ENCODE measurements at regions of chr6 and their contacts with region 1.

Region 1: GRCh38 chr6:149431905-149432775 is 32.1 kb downstream of the SUMO4 start:
- DNase-seq: peak; percentile 78 to 94 (median 88)
- ATAC-seq: peak; percentile 84
- H3K4me3 ChIP-seq: peak overlapping the region; percentile 17
- H3K4me3 Mint-ChIP-seq: peak overlapping the region; percentile 45
- H3K27ac ChIP-seq: no peak overlapping the region
- H3K27ac Mint-ChIP-seq: no peak overlapping the region
- H3K4me1 ChIP-seq: peaks cover 6% of the 10 kb centered on the region
- H3K4me1 Mint-ChIP-seq: peaks cover 6% of the 10 kb centered on the region
- H3K27me3 ChIP-seq: no peaks in the 10 kb centered on the region
- H3K27me3 Mint-ChIP-seq: no peaks in the 10 kb centered on the region
- CTCF ChIP-seq: peak; percentile 96

Region 2: DNA sequence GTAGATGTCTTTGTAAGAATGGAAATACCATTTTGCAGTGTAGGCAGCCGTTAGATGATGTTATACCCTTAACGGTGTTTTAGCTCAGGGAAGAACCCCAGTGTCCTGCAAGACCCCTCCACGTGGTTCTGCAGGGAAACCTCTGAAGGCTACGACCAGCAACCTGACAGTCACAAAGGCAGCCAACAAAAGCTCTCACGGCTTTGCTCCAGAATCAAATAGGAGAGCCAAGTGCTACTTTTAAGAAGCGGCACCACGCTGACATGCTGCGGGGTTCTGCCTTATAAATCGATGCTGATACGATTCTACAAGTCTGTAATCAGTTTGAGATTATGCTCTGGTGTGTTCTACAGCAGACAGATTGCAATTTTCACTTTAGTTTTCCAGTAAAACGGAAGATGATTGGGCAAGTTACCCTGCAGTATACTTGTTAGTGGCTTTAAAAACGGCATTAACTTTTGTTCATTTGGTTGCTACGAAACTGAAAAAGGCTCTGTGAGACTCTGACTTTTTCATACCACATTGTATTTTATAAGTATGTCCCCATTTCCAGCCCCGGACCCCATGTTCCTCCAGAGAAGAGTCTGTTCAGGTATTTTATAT is 1610.7 kb before region 1 on chr6:
- CTCF ChIA-PET with region 1: no interaction called
- POLR2A ChIA-PET with region 1: no interaction called
- intact Hi-C with region 1: no loop called
- DNase-seq: no peak
- ATAC-seq: no peak
- H3K4me3 ChIP-seq: no peak overlapping the region
- H3K4me3 Mint-ChIP-seq: no peak overlapping the region
- H3K27ac ChIP-seq: no peak overlapping the region
- H3K27ac Mint-ChIP-seq: no peak overlapping the region
- H3K4me1 ChIP-seq: no peaks in the 10 kb centered on the region
- H3K4me1 Mint-ChIP-seq: no peaks in the 10 kb centered on the region
- H3K27me3 ChIP-seq: no peaks in the 10 kb centered on the region
- H3K27me3 Mint-ChIP-seq: no peaks in the 10 kb centered on the region
- CTCF ChIP-seq: no peak

Region 3: GRCh38 chr6:148559848-148560433 is 872.2 kb before region 1 on chr6:
- CTCF ChIA-PET with region 1: no interaction called
- POLR2A ChIA-PET with region 1: no interaction called
- intact Hi-C with region 1: loop called in 1 of 2 experiments (anchors 5 kb)
- DNase-seq: peak; percentile 40 to 81 (median 56)
- ATAC-seq: peak; percentile 86
- H3K4me3 ChIP-seq: peak overlapping the region; percentile 27
- H3K4me3 Mint-ChIP-seq: no peak overlapping the region
- H3K27ac ChIP-seq: no peak overlapping the region
- H3K27ac Mint-ChIP-seq: no peak overlapping the region
- H3K4me1 ChIP-seq: peaks cover 9% of the 10 kb centered on the region
- H3K4me1 Mint-ChIP-seq: peaks cover 8% of the 10 kb centered on the region
- H3K27me3 ChIP-seq: no peaks in the 10 kb centered on the region
- H3K27me3 Mint-ChIP-seq: peaks cover 26% of the 10 kb centered on the region
- CTCF ChIP-seq: peak; percentile 91

Region 4: DNA sequence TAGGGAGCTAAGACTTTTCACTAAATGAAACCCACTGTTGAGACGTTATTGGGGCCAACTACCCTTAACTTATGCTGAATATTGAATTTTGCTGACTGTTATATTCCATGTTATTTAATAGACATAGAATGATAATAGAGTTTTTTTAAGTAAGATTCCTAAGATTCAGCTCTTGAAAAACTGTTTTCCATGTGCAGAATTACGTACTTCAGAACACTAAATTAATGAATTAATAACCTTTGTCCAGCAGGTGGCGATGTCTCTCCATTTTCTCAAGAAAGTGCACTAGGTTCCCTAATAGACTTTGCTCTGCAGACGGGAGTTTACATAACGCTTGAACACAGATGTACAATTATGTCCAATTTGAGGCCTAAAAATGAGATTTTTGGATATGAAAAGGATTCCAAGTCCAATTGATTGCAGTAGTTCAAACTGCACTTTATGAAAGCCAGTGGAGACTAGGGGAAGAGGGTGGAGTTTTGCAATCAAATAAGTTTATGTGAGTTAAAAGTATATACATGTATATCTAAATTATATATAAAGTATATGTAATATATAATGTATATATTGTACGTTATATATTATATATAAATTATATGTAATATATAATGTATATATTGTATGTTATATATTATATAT is 403.3 kb before region 1 on chr6:
- CTCF ChIA-PET with region 1: interaction called, 52 read pairs
- POLR2A ChIA-PET with region 1: interaction called, 7 read pairs
- intact Hi-C with region 1: loop called (anchors 1 kb)
- DNase-seq: peak; percentile 23 to 91 (median 58)
- ATAC-seq: peak; percentile 73
- H3K4me3 ChIP-seq: no peak overlapping the region
- H3K4me3 Mint-ChIP-seq: no peak overlapping the region
- H3K27ac ChIP-seq: no peak overlapping the region
- H3K27ac Mint-ChIP-seq: peak overlapping the region; percentile 1
- H3K4me1 ChIP-seq: peaks cover 21% of the 10 kb centered on the region
- H3K4me1 Mint-ChIP-seq: peaks cover 45% of the 10 kb centered on the region
- H3K27me3 ChIP-seq: no peaks in the 10 kb centered on the region
- H3K27me3 Mint-ChIP-seq: no peaks in the 10 kb centered on the region
- CTCF ChIP-seq: peak; percentile 86

Region 5: DNA sequence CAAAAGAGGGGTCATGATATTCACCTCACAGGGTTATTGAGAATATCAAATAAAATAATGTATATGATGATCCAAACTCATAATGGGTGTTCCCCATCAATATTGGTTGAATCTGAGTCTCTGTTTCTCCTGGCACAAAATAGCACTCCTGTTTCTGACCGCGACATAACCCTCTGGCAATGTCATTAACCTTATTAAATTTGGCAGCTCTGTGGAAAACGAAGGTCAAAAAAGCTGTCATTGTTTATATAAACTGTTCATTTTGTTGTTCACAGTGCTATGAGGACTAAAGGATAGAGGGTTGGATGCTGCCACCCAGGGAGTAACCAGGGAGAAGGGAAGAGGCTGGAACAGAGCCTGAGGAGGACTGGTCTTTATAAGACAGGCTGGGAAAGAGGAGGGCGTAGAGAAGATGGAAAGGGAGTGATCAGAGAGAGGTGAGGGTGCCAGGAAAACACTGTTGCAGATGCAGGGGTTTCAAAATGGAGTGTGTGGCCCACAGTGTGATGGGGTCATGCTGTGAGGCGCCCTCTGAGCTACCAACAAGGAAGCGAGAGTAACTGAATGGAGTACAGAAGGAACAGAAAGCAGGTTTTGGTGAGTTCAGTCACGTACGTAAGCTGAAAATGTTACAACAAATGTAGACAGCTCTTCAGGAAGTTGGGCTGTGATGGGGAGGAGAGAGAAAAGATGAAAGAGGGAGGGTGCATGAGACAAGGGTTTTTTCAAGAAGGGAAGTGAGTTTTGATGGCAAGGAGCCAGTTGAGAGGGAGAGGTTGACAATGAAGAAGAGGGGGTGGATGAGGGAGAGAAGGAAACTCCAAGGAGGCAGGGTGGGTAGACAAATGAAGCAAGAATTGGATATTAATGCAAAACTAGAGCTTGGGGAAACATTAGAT is 366.2 kb before region 1 on chr6:
- CTCF ChIA-PET with region 1: interaction called, 13 read pairs
- POLR2A ChIA-PET with region 1: interaction called, 3 read pairs
- intact Hi-C with region 1: no loop called
- DNase-seq: peak in 13 of 14 experiments; percentile 11 to 91 (median 36)
- ATAC-seq: peak; percentile 96
- H3K4me3 ChIP-seq: peak overlapping the region; percentile 25
- H3K4me3 Mint-ChIP-seq: peak overlapping the region; percentile 16
- H3K27ac ChIP-seq: peak overlapping the region; percentile 75 to 83
- H3K27ac Mint-ChIP-seq: peak overlapping the region; percentile 86
- H3K4me1 ChIP-seq: peaks cover 28% of the 10 kb centered on the region
- H3K4me1 Mint-ChIP-seq: peaks cover 37% of the 10 kb centered on the region
- H3K27me3 ChIP-seq: no peaks in the 10 kb centered on the region
- H3K27me3 Mint-ChIP-seq: no peaks in the 10 kb centered on the region
- CTCF ChIP-seq: no peak

Region 6: GRCh38 chr6:149190224-149190831 is 241.8 kb before region 1 on chr6:
- CTCF ChIA-PET with region 1: interaction called, 4 read pairs
- POLR2A ChIA-PET with region 1: no interaction called
- intact Hi-C with region 1: loop called in 1 of 2 experiments (anchors 2 kb)
- DNase-seq: peak; percentile 18 to 73 (median 45)
- ATAC-seq: no peak
- H3K4me3 ChIP-seq: no peak overlapping the region
- H3K4me3 Mint-ChIP-seq: no peak overlapping the region
- H3K27ac ChIP-seq: no peak overlapping the region
- H3K27ac Mint-ChIP-seq: no peak overlapping the region
- H3K4me1 ChIP-seq: peaks cover 9% of the 10 kb centered on the region
- H3K4me1 Mint-ChIP-seq: peaks cover 10% of the 10 kb centered on the region
- H3K27me3 ChIP-seq: no peaks in the 10 kb centered on the region
- H3K27me3 Mint-ChIP-seq: no peaks in the 10 kb centered on the region
- CTCF ChIP-seq: peak; percentile 32

Region 7: GRCh38 chr6:149306967-149307366 is 125.2 kb before region 1 on chr6:
- CTCF ChIA-PET with region 1: no interaction called
- POLR2A ChIA-PET with region 1: no interaction called
- intact Hi-C with region 1: no loop called
- DNase-seq: no peak
- ATAC-seq: no peak
- H3K4me3 ChIP-seq: no peak overlapping the region
- H3K4me3 Mint-ChIP-seq: no peak overlapping the region
- H3K27ac ChIP-seq: no peak overlapping the region
- H3K27ac Mint-ChIP-seq: no peak overlapping the region
- H3K4me1 ChIP-seq: no peaks in the 10 kb centered on the region
- H3K4me1 Mint-ChIP-seq: no peaks in the 10 kb centered on the region
- H3K27me3 ChIP-seq: no peaks in the 10 kb centered on the region
- H3K27me3 Mint-ChIP-seq: no peaks in the 10 kb centered on the region
- CTCF ChIP-seq: no peak

Region 8: DNA sequence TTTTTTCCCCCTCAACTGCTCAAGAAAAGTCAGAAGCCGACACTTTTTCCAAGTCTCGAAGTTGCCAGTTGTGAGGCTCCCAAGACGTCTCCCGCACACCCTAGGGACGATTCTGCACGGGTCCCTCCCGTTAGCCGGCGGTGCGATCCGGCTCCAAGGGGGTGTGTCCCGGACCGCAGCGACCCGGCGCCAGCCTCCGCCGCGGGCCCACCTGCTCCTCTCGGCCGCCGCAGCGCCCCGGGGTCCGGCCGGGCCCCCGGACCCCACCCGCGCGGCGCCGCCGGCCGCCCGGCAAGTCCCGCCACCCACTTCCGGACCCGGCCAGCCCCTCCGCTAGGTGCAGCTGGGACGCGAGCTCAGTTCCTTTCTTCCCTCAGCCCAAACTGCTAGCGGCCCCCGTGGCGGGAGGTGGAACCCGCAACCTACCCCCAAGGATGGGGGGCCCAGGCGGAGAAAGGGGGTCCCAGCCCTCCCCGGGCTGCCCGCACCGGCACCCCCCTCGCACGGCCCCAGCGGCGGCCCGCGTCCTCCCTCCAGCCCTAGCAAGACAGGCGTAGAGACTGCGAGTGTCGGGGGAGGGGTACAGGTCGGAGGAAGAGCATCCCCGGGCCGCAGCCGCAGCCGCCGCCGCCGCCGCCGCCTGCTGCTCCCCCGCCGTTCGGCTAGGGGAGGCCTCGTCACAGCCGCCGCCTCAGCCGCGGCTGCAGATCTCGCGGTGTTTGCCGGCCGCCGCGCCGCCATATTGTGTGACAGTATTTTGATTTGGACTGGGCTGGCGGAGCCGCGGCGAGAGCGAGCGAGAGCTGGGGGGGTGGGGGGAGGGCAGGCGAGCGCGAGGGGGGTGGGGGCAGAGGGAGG is 115.1 kb before region 1 on chr6:
- CTCF ChIA-PET with region 1: no interaction called
- POLR2A ChIA-PET with region 1: interaction called, 10 read pairs
- intact Hi-C with region 1: no loop called
- DNase-seq: peak; percentile 83 to 97 (median 88)
- ATAC-seq: peak; percentile 74
- H3K4me3 ChIP-seq: peak overlapping the region; percentile 73
- H3K4me3 Mint-ChIP-seq: peak overlapping the region; percentile 88
- H3K27ac ChIP-seq: peak overlapping the region; percentile 67 to 95
- H3K27ac Mint-ChIP-seq: peak overlapping the region; percentile 86
- H3K4me1 ChIP-seq: peaks cover 10% of the 10 kb centered on the region
- H3K4me1 Mint-ChIP-seq: peaks cover 49% of the 10 kb centered on the region
- H3K27me3 ChIP-seq: no peaks in the 10 kb centered on the region
- H3K27me3 Mint-ChIP-seq: no peaks in the 10 kb centered on the region
- CTCF ChIP-seq: no peak

Region 9: GRCh38 chr6:149484733-149485700 is 52.9 kb after region 1 on chr6 and contains the start of gene ZC3H12D:
- CTCF ChIA-PET with region 1: interaction called, 10 read pairs
- POLR2A ChIA-PET with region 1: no interaction called
- intact Hi-C with region 1: no loop called
- DNase-seq: peak; percentile 74 to 95 (median 81)
- ATAC-seq: peak; percentile 77
- H3K4me3 ChIP-seq: peak within 1 kb of the TSS; percentile 68
- H3K4me3 Mint-ChIP-seq: peak within 1 kb of the TSS; percentile 92
- H3K27ac ChIP-seq: peak within 1 kb of the TSS; percentile 91 to 97
- H3K27ac Mint-ChIP-seq: peak within 1 kb of the TSS; percentile 99
- H3K4me1 ChIP-seq: peaks cover 75% of the 10 kb centered on the region
- H3K4me1 Mint-ChIP-seq: peaks cover 61% of the 10 kb centered on the region
- H3K27me3 ChIP-seq: no peaks in the 10 kb centered on the region
- H3K27me3 Mint-ChIP-seq: no peaks in the 10 kb centered on the region
- CTCF ChIP-seq: peak; percentile 76
- total RNA-seq, gene ZC3H12D: 70.2 to 71.0 TPM

Measured in CD4-positive, alpha-beta T cell (primary cell).